Activated CD8-positive, alpha-beta T cell treated with anti-CD3 and anti-CD28 coated beads, Interleukin-2, amount 10 ng/mL, durations not matched to agents 7 days and 5 days (primary cell): ENCODE measurements at regions of chr1 and their contacts with region 1.

Region 1: DNA sequence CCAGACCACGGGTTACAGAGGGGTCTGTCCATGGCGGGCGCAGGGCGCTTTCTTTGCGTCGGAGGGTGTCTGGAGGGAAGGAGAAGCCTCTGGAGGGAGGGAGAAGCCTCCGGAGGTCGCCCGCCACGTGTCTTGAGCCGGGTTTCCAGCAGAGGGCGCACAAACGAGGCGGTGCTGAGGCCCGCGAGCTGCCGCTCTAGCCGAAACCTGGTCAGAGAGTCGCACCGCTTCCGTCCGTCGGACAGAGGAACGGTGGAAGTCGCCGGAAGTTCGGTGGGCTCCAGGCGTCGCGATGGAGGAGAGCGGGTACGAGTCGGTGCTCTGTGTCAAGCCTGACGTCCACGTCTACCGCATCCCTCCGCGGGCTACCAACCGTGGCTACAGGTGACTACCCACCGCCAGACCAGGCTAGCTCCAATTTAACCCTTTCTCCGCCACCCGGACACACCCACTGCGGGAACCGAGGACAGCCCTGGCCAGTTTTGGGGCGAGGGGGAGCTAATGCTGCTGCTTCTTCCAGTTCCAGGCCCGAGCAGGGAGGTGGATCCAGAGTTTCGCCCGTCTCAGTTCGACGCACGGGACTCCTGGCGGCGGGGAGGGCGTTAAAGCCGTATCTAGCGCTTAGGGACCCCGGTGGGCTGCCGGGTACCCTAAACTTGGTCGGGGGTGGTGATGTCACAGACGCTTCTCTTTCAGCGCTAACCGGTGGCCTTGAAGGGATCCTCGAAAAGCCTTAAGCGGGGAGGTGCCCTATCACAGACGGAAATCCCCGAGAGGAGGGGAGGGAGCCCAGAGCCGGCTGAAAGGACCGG is at the start of gene NECAP2:
- DNase-seq: peak; percentile 97
- ATAC-seq: peak; percentile 89
- H3K4me3 Mint-ChIP-seq: peak within 1 kb of the TSS; percentile 88
- H3K27ac Mint-ChIP-seq: peak within 1 kb of the TSS; percentile 92
- H3K4me1 Mint-ChIP-seq: peaks cover 40% of the 10 kb centered on the region
- H3K27me3 Mint-ChIP-seq: no peaks in the 10 kb centered on the region
- total RNA-seq, gene NECAP2: 93.8 to 94.3 TPM

Region 2: DNA sequence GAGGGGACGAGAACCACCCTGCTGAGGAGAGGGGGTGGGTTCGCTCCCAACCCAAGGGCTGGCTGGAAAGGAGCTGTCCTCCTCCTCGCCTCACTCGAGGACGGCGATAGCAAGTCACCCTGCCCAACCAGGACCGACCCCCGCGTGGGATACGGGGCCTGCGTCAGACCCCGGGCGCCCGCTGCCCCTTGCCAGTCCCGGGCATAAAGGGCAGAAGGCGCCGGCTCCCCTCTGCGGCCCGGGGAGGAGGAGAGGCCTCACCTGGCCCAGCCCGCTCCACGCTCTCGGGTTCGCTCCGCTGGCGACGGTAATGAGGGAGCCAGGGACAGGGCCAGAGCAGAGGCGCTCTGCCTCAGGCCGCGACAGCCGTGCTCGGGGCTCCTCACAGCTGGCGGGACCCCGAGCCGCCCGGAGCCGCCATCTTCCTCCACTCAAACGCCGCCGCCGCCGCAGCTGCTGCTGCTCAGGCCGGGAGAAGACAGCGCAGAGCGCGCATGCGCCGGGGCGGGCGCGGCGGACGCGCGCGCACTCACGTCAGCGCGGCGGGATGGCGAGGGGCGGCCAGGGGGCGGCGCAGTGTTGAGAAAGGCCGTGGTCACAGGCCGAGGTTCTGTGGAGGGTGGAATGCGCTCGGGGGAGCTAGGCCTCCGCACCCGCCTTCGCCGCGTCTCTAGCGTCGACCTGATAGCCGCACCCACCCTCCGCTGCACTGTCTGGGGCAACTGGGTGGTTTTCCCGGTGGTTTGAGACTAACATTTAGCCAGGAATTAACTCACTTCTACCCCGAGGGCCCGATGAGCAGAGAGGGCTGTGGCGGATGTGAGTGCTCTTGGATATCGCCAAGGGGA is 88.5 kb before region 1 on chr1 and contains the start of gene FBXO42:
- CTCF ChIA-PET with region 1: interaction called, 7 read pairs
- POLR2A ChIA-PET with region 1: interaction called, 10 read pairs
- DNase-seq: peak; percentile 93
- ATAC-seq: peak; percentile 96
- H3K4me3 Mint-ChIP-seq: peak within 1 kb of the TSS; percentile 88
- H3K27ac Mint-ChIP-seq: peak within 1 kb of the TSS; percentile 95
- H3K4me1 Mint-ChIP-seq: peaks cover 27% of the 10 kb centered on the region
- H3K27me3 Mint-ChIP-seq: no peaks in the 10 kb centered on the region
- total RNA-seq, gene FBXO42: 19.7 to 23.4 TPM

Region 3: DNA sequence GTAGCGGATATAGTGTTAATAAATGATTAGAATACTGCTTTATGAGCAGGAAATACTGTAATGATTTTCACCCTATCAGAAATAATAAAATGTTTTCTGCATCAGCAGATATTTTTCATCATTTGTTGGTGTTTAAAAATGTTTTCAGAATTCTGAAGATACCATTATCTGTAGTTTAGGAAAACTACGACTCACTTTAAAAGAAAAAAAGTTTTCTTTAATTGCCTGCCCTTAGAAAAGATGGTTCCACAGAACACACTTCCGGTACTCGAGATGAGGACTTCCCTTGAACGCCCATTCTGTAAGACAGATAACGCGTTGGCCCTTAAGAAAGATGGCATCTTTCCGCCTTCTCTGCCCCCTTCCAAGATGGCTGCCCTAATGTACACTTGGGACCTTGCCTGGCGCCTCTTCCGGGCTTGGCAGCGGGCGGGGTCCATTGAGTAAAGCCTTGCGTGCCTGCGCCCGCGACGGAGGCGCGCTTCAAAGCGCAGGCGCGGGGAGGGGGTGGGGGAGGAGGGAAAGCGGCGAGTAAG is 73.9 kb before region 1 on chr1 and contains the start of gene SZRD1:
- CTCF ChIA-PET with region 1: interaction called, 27 read pairs
- POLR2A ChIA-PET with region 1: interaction called, 20 read pairs
- DNase-seq: peak; percentile 98
- ATAC-seq: peak; percentile 89
- H3K4me3 Mint-ChIP-seq: peak within 1 kb of the TSS; percentile 97
- H3K27ac Mint-ChIP-seq: peak within 1 kb of the TSS; percentile 100
- H3K4me1 Mint-ChIP-seq: peaks cover 43% of the 10 kb centered on the region
- H3K27me3 Mint-ChIP-seq: no peaks in the 10 kb centered on the region
- total RNA-seq, gene SZRD1: 171 to 176 TPM

Region 4: DNA sequence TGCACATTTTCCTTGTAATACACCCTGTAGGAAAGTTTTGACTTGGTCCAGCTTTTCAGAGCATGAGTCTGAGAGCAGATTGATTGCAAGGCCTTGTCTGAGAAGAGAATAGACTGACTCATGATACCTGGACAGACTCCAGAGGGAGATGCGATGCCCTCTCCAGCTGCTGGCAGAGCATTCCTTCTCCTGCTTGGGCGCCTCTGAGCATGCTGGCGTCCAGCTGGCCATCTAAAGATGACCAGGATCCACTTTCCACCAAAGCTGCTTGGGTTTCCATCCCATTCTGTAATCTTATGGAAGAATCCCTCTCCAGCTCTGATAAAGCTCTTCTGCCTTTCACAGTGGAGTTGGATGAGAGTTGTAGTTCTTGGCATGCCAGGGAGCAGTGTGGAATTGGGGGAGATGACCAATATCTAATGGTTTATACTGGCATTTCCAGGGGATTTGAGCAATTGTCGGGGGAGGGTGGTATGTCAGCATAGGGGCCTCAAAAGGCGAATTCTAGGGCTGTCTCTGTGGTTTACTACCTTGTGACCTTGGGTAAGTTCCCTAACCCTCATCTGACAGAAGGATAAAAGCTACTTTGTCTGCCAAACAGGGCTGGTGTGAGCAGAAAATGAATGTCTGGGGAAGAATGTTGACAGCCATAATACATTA is 54.1 kb before region 1 on chr1:
- CTCF ChIA-PET with region 1: interaction called, 18 read pairs
- POLR2A ChIA-PET with region 1: interaction called, 10 read pairs
- DNase-seq: no peak
- ATAC-seq: peak; percentile 58
- H3K4me3 Mint-ChIP-seq: peak overlapping the region; percentile 26
- H3K27ac Mint-ChIP-seq: peak overlapping the region; percentile 60
- H3K4me1 Mint-ChIP-seq: peaks cover 67% of the 10 kb centered on the region
- H3K27me3 Mint-ChIP-seq: no peaks in the 10 kb centered on the region

Region 5: DNA sequence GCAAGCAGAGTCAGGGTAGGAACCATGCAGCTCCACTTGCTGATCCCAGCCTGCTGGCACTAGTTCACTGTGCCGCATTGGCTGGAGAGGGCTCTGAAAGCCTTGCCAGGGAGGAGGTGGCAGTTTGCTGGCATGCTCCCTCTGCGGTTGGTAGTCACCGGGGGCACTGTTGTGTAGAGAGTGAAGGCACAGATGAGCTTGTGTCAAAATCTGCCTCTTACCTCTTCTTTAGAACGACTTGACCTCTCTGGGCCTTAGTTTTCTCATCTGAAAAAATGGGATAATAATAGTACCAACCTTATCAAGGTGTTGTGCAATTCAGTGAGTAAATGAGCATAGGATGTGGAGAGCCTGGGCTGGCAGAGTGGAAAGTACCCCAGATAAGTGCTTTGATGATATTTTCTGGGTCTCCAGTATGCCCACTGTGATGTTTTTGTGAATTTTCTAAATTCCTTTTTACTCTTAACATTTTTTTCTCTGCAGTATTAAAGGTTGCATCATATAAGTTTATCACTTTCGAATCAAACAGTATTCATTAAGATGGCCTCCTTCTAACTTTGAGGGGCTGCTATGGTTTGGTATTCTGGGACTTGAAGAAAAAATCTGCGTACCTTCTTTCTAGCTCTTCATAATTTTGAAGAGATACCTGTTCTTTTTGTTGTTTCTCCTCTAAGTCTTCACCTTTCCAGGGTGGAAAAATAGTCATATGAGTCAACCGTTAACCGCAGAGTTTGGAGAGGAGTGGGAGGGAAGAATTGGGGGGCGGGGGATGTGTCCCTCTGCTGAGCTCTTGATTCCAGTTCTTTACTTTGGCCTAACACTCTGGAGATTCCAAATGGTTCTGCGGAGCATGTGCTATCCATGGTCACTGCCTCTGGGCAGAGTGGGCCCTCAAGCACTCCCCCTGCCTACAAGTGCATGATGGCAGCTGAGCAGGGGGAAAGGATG is 46.8 kb before region 1 on chr1:
- CTCF ChIA-PET with region 1: interaction called, 18 read pairs
- POLR2A ChIA-PET with region 1: no interaction called
- DNase-seq: no peak
- ATAC-seq: no peak
- H3K4me3 Mint-ChIP-seq: no peak overlapping the region
- H3K27ac Mint-ChIP-seq: no peak overlapping the region
- H3K4me1 Mint-ChIP-seq: peaks cover 50% of the 10 kb centered on the region
- H3K27me3 Mint-ChIP-seq: no peaks in the 10 kb centered on the region

Region 6: GRCh38 chr1:16420424-16421118 is 20.1 kb before region 1 on chr1:
- CTCF ChIA-PET with region 1: interaction called, 37 read pairs
- POLR2A ChIA-PET with region 1: interaction called, 27 read pairs
- DNase-seq: peak; percentile 80
- ATAC-seq: peak; percentile 96
- H3K4me3 Mint-ChIP-seq: peak overlapping the region; percentile 63
- H3K27ac Mint-ChIP-seq: peak overlapping the region; percentile 97
- H3K4me1 Mint-ChIP-seq: peaks cover 39% of the 10 kb centered on the region
- H3K27me3 Mint-ChIP-seq: no peaks in the 10 kb centered on the region

Region 7: GRCh38 chr1:16503494-16503893 is 62.8 kb after region 1 on chr1:
- CTCF ChIA-PET with region 1: no interaction called
- POLR2A ChIA-PET with region 1: no interaction called
- DNase-seq: no peak
- ATAC-seq: no peak
- H3K4me3 Mint-ChIP-seq: no peak overlapping the region
- H3K27ac Mint-ChIP-seq: no peak overlapping the region
- H3K4me1 Mint-ChIP-seq: peaks cover 17% of the 10 kb centered on the region
- H3K27me3 Mint-ChIP-seq: no peaks in the 10 kb centered on the region